ENCODE measurements at regions of chr4 and their contacts with region 1.

Region 1: DNA sequence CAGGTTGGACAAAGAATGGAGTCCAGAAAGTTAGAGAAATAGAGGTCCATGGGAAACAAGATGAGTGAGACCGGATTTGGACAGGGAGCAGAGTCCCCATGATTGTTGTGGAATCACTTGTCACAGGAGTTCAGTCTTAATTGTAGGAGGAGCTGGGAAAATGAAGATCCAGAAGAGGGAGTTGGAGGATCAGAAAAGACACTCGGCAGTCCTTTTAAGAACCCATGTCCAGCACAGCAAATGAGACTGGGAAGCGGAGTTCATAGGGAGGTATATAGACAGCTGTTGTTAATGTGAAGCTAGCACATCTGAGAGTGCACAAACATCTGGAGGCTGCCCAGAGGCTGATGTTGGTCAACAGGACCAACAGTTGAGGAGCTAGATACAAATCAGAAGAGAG is 111.4 kb upstream of the RXFP1 start:
- DNase-seq: peak; percentile 44
- H3K4me3 ChIP-seq: no peak overlapping the region
- H3K27ac ChIP-seq: no peak overlapping the region
- H3K4me1 ChIP-seq: no peaks in the 10 kb centered on the region
- H3K27me3 ChIP-seq: no peaks in the 10 kb centered on the region
- CTCF ChIP-seq: peak; percentile 39; the same call in 1 of the 2 replicates

Region 2: DNA sequence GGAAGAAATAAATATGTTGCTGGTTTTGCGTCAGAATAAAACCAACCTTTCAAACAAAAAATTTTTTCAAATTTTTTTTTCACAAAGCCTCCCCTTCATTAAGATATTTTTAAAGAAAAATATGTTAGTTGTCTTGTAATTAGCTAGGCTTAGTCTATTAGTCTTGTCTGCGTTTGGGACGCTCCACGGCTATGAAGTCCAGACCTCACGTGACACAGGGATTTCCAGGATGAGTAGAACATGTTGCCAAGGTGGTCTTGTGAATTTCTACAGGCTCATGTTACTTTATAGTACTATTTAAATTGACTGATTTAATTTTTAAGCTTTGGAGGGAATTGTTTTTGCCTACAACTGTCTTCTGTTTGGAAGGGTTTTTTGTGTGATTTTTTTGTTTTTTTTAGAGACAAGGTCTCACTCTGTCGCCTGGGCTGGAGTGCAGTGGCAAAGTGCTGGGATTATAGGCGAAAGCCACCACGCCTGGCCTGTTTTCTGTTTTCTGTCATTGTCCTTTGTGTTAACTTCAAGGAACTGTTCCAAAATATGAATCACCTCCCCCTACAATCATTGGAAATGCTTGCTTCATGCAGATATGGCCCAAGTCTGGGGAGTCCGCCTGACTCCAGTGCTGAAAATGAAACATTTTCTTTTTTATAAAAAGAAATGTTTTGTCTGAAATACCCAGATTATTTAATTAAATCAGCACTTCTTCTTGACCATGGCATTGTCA is 173.8 kb before region 1 on chr4:
- CTCF ChIA-PET with region 1: no interaction called
- POLR2A ChIA-PET with region 1: no interaction called
- intact Hi-C with region 1: no loop called
- DNase-seq: no peak
- H3K4me3 ChIP-seq: no peak overlapping the region
- H3K27ac ChIP-seq: no peak overlapping the region
- H3K4me1 ChIP-seq: no peaks in the 10 kb centered on the region
- H3K27me3 ChIP-seq: no peaks in the 10 kb centered on the region
- CTCF ChIP-seq: no peak

Region 3: DNA sequence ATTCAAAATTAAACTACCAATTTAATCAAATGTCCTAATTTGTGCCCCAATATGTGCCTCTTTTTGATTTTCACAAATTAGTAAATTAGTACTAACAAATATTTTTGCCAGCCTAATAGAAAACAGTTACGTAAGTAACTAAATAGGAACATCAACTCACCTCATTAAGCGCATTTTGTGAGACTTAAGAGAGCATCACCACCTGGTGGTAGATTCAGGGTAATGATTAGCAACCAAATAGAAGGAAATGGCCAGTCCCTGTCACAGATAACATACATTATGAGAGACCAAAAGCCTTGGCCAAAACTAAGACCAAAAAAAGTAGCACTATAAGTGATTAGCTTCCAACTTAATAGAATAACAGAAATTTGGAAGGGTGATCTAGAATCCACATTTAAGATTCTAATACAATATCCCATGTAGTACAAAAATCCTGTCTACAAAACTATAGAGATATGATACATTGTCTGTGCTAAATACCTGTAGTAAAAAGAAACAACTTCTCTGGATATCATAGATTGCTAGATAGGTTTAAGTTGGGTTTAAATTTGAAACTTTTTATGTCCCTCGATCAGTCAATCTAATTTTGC is 214.7 kb after region 1 on chr4:
- CTCF ChIA-PET with region 1: interaction called, 3 read pairs
- POLR2A ChIA-PET with region 1: no interaction called
- intact Hi-C with region 1: loop called (anchors 2 kb)
- DNase-seq: peak; percentile 74
- H3K4me3 ChIP-seq: no peak overlapping the region
- H3K27ac ChIP-seq: no peak overlapping the region
- H3K4me1 ChIP-seq: no peaks in the 10 kb centered on the region
- H3K27me3 ChIP-seq: peaks cover 17% of the 10 kb centered on the region
- CTCF ChIP-seq: peak; percentile 86

Region 4: DNA sequence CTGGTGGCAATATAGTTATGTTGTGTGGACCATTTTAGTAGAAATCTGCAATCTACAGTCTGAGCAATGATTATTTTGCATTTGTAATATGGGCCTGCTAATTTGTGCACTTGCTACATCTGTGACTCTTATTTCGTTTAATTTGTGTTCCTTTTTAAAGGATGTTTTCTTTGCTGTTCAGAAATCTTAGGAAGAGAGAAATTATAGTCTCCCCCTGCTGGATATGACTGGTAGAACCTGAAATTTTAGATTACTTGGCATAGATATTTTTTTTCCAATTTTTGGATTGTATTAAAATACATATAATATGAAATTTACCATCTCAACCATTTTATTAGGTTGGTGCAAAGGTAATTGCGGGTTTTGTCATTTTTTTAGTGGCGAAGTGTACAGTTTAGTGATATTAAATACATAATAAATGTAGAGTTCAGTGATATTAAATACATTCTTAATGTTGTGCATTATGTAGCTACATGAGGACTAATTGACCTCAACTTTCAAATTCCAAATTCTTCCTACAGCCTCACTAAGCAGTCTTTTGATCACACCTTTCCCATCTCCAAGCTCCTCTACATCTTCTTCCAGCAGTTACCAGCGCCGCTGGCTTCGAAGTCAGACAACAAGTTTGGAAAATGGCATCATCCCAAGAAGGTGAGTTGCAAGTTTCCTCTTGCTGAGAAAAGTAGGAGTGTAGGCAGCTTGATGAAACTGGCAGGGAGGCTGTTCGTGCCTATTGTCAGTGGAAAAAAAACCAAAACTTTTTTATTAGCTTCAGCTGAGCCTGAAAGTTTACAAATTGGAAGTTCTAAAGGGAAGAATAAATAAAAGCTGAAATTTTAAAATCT is 440.8 kb after region 1 on chr4:
- CTCF ChIA-PET with region 1: no interaction called
- POLR2A ChIA-PET with region 1: no interaction called
- intact Hi-C with region 1: loop called (anchors 2 kb)
- DNase-seq: peak; percentile 56
- H3K4me3 ChIP-seq: no peak overlapping the region
- H3K27ac ChIP-seq: no peak overlapping the region
- H3K4me1 ChIP-seq: no peaks in the 10 kb centered on the region
- H3K27me3 ChIP-seq: no peaks in the 10 kb centered on the region
- CTCF ChIP-seq: peak; percentile 87

Region 5: DNA sequence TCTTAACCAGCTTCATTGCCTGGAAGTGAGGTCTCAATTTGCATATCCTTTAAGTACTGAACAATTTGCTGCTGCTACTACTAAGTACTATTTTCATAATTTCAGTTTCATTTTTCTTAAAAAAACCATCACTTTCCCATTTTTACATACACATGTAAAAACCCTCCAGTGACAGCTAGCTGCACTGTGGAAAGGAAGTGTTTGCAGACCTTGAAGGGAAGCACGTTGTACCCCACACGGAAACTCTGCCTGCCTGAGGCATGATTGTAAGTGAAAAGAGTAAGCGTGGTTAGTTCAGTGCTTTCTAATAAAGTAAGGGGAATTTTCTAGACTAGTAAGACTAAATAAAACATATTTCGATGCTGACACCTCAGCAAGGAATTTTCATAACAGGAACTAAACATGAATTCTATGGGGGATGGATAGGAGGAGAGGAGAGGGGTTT is 796.2 kb after region 1 on chr4:
- CTCF ChIA-PET with region 1: no interaction called
- POLR2A ChIA-PET with region 1: no interaction called
- intact Hi-C with region 1: loop called (anchors 10 kb)
- DNase-seq: no peak
- H3K4me3 ChIP-seq: no peak overlapping the region
- H3K27ac ChIP-seq: no peak overlapping the region
- H3K4me1 ChIP-seq: no peaks in the 10 kb centered on the region
- H3K27me3 ChIP-seq: no peaks in the 10 kb centered on the region
- CTCF ChIP-seq: no peak